ENCODE measurements at regions of chr2 and their contacts with region 1.

Region 1: DNA sequence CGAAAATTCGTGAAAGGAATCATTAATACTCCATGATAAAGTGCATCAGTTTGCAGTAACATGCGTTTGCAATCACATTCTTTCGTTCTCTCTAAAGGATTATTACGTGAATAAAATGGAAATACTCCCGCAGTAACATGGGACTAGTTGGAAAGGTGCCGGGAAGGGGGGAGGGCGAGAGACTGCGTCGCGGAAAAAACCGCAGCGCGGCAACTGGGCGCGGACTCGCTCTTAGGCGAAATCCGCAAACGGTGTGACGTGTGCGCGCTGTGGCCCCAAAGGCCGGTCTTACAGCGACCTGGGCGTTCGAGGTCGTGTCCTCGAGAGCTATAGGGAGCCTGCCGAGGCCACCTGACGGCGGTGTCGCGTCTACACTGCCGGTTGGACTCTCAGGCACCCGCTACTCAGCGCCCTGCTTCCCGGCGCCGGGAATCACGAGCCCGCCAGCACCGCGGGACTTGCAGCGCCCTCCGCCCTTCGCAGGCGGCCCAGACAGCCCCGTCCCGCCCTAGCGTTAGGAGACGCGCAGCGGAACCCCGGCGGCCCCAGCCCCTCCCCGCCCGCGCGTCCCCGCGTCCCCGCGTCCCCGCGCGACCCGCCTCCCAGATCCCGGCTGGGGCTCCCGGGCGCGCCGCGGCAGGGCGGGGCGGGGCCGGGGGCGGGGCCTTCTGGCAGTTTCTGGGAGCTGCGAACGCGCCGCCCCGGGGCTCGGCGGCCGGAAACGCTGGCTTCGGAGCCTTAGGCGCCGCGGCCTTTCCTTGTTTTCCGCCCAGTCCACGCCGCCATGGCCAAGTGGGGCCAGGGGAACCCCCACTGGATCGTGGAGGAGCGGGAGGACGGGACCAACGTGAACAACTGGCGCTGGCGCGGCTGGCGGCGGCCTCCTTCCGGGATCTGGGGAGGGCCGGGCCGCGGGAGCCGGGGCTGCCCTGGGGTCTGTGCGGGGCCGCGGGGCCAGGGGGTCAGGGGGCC is 15.1 kb downstream of the C2orf74 start:
- DNase-seq: peak; percentile 81 to 99 (median 90)

Region 2: GRCh38 chr2:60881047-60881932 is 295.8 kb before region 1 on chr2 and contains the start of gene REL:
- intact Hi-C with region 1: loop called (anchors 5 kb)
- DNase-seq: peak; percentile 74 to 98 (median 84)

Region 3: GRCh38 chr2:61016808-61017555 is 160.1 kb before region 1 on chr2:
- intact Hi-C with region 1: loop called (anchors 5 kb)
- DNase-seq: peak; percentile 55 to 95 (median 66)

Region 4: GRCh38 chr2:61145990-61146389 is 31.1 kb before region 1 on chr2:
- intact Hi-C with region 1: loop called (anchors 2 kb)
- DNase-seq: no peak

Region 5: DNA sequence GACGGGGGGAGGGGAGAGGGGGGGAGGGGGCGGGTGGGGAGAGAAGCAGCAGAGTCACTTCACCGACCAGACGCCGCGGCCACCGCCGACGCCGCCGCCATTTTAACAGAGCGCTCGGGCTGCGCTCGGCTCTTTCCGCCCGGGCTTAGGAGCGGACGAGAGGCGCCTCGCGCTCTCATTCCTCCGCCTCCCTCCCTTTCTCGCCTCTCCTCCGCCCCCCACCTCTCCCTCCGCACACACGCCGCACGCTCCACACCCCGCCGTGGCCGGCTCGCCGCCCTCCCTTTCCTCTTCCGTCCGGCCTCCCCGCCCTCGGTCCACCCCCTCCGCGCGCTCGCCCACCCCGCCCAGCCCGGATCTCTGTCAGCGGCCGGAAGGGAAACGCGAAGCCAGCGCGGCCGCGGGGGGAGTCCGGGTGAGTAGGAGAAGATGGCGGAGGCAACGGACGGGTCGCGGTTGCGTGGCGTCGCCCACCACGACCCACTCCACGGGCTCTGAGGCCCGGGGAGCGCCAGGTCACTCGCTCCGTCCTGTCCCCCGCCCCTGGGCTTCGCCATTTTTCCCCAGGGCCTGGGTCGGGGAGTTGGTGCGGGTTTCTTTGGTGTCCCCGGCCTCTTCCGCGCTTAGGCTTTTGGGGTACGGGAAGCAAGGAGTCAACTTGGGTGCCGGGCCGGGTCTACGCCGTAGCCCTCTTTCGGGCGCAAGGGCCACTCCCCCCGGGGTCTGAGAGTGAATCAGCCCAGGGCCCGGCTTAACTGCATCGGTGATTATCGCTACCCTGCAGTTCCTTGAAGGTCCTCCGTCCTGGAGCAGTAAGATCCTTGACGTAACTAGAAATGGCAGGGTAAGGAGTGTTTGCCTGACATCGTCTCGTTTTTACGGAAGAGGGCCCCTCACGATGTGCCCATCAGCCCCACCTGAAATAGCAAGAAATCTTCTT is 294.2 kb after region 1 on chr2 and contains the start of gene USP34:
- intact Hi-C with region 1: loop called (anchors 10 kb)
- DNase-seq: peak; percentile 84 to 98 (median 92)

Region 6: DNA sequence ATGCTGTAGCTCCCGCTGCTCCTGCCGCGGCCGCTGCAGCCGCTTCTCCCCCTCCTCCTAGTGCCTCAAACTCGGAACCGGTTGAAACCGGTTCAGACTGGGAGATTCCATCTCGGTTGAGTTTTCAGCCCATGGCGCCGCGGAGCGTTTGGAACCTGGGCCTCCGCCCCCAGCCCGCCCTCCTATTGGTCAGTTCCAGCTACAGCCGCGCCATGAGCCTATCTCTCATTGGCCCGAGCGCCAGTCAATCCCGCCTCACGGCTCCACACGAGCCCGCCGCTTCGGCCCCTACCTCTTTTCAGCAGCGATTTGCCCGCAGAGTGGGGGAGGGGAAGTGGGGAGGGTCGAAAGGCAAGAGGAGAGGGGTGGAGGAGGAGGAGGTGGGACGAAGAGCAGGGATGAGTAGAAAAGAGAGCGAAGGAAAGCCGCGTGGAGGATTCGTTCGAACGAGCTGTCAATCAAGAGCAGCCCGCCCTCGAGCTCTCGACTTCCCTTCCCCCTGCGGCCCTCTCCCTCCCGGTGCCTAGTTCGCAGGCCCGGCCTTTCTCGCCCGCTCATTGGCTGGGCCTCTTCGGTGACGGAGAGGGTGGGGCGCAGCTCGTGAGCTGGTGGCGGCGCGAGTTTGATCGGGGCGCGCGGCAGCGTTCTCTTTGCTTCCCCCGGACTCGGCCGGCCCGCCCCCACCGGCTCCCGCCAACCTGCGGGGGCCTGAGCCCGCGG is 361.3 kb after region 1 on chr2 and contains the start of gene XPO1:
- intact Hi-C with region 1: loop called (anchors 2 kb)
- DNase-seq: peak; percentile 99 to 100 (median 100)